ENCODE measurements at regions of chr5 and their contacts with region 1.

Region 1: GRCh38 chr5:170434966-170435605 is 45.9 kb upstream of the KCNMB1 start:
- DNase-seq: peak; percentile 64 to 72 (median 68)
- ATAC-seq: peak; percentile 88 to 98 (median 94)
- H3K4me3 ChIP-seq: no peak overlapping the region
- H3K27ac ChIP-seq: no peak overlapping the region
- H3K4me1 ChIP-seq: no peaks in the 10 kb centered on the region
- H3K27me3 ChIP-seq: no peaks in the 10 kb centered on the region
- CTCF ChIP-seq: peak; percentile 89 to 97 (median 96)
- POLR2A ChIP-seq: no peak

Region 2: GRCh38 chr5:169716278-169716677 is 718.8 kb before region 1 on chr5:
- intact Hi-C with region 1: loop called in 1 of 2 experiments (anchors 10 kb)
- DNase-seq: no peak
- ATAC-seq: peak in 2 of 4 donors; percentile 24 to 78
- H3K4me3 ChIP-seq: no peak overlapping the region
- H3K27ac ChIP-seq: no peak overlapping the region
- H3K4me1 ChIP-seq: no peaks in the 10 kb centered on the region
- H3K27me3 ChIP-seq: no peaks in the 10 kb centered on the region
- CTCF ChIP-seq: no peak
- POLR2A ChIP-seq: no peak

Region 3: DNA sequence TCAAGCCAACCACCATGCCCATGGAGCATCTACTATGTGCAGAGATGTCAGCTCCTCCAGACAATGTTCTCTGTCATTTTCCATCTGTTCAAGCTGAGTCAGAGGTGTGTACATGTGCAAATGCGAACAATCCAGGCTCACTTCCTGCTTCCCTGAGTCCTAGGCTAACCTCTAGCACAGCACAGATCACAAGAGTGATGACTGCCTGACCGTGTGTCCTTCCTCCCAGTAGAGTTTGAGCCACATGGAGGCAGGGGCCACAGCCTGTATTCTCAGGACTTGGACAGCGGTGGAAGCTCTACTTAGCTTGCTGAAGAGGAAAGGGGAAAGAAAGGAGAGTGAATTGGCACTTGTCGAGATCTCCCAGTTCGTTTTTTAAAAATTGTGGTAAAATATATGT is 156.0 kb after region 1 on chr5:
- intact Hi-C with region 1: no loop called
- DNase-seq: no peak
- ATAC-seq: no peak
- H3K4me3 ChIP-seq: no peak overlapping the region
- H3K27ac ChIP-seq: no peak overlapping the region
- H3K4me1 ChIP-seq: no peaks in the 10 kb centered on the region
- H3K27me3 ChIP-seq: no peaks in the 10 kb centered on the region
- CTCF ChIP-seq: no peak
- POLR2A ChIP-seq: no peak

Region 4: GRCh38 chr5:170625221-170626165 is 190.4 kb after region 1 on chr5:
- intact Hi-C with region 1: loop called (anchors 5 kb)
- DNase-seq: no peak
- ATAC-seq: no peak
- H3K4me3 ChIP-seq: no peak overlapping the region
- H3K27ac ChIP-seq: no peak overlapping the region
- H3K4me1 ChIP-seq: no peaks in the 10 kb centered on the region
- H3K27me3 ChIP-seq: no peaks in the 10 kb centered on the region
- CTCF ChIP-seq: no peak
- POLR2A ChIP-seq: no peak

Region 5: DNA sequence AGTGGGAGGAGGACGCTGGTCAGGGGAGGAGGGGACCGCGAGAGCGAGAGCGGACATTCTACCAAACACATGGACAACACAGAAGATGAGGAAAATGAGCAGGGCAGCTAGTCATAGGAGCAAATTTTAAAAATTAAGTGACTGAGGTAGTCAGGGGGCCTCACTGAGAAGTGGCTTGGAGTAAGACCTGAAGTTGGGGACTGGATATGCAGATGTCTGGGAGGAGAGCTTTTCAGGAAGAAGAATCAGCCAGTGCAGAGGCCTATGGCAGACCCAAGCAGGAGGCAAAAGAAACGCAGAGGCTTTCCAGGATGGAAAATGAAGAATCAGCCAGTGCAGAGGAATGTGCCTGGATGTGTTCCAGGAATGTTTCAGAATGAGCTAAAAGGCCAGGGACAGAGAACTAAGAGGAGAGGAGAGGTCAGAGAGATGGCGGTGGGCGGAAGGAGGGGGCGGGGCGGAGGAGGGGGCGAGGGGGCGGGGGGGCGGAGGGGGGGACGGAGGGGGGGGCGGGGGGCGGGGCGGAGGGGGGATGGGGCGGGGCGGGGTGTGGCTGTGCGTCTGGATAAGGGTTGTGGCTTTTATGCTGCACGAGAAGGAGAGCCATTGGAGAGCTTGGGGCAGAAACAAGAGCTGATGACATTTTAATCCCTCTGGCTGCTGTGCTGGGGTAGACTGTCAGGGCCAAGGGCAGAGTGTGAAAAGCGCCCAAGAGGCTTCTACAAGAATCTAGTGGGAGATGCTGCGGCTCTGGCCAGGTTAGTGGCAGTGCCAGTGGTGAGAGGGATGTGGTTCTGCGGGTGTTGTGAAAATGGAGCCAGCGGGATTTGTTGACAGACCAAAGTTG is 198.4 kb after region 1 on chr5:
- intact Hi-C with region 1: loop called (anchors 5 kb)
- DNase-seq: no peak
- ATAC-seq: peak; percentile 56 to 73 (median 66)
- H3K4me3 ChIP-seq: no peak overlapping the region
- H3K27ac ChIP-seq: peak overlapping the region; percentile 47 to 48 (median 47)
- H3K4me1 ChIP-seq: peaks cover 0 to 5% (median 1%) of the 10 kb centered on the region in 4 donors
- H3K27me3 ChIP-seq: peaks cover 0 to 6% of the 10 kb centered on the region in 2 donors
- CTCF ChIP-seq: peak in 1 of 4 donors; percentile 18
- POLR2A ChIP-seq: no peak